Breast epithelium (tissue), 4 donors: ENCODE measurements at regions of chr3 and their contacts with region 1.

Region 1: DNA sequence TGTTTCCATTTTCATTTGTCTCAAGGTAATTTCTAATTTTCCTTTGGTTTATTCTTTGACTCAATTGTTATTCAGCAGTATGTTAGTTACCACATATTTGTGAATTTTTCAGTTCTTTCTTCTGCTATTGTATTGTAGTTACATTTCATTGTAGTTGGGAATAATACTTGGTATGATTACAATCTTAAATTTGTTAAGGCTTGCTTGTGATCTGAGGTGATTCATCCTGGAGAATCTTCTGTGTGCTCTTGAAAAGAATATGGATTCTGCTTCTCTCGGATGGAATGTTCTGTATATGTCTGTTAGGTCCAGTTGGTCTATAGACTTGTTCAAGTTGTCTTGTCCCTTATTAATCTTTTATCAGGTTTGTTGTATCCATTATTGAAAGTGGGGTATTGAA is 63.4 kb upstream of the VEPH1 start:
- DNase-seq: no peak
- H3K4me3 ChIP-seq: no peak overlapping the region
- H3K27ac ChIP-seq: no peak overlapping the region
- H3K4me1 ChIP-seq: no peaks in the 10 kb centered on the region
- H3K27me3 ChIP-seq: no peaks in the 10 kb centered on the region
- CTCF ChIP-seq: no peak
- POLR2A ChIP-seq: no peak

Region 2: GRCh38 chr3:158909870-158910269 is 1343.3 kb after region 1 on chr3:
- intact Hi-C with region 1: loop called (anchors 10 kb)
- DNase-seq: no peak
- H3K4me3 ChIP-seq: no peak overlapping the region
- H3K27ac ChIP-seq: no peak overlapping the region
- H3K4me1 ChIP-seq: no peaks in the 10 kb centered on the region
- H3K27me3 ChIP-seq: no peaks in the 10 kb centered on the region
- CTCF ChIP-seq: no peak
- POLR2A ChIP-seq: no peak